T-cell (primary cell): ENCODE measurements at regions of chr9 and their contacts with region 1.

Region 1: DNA sequence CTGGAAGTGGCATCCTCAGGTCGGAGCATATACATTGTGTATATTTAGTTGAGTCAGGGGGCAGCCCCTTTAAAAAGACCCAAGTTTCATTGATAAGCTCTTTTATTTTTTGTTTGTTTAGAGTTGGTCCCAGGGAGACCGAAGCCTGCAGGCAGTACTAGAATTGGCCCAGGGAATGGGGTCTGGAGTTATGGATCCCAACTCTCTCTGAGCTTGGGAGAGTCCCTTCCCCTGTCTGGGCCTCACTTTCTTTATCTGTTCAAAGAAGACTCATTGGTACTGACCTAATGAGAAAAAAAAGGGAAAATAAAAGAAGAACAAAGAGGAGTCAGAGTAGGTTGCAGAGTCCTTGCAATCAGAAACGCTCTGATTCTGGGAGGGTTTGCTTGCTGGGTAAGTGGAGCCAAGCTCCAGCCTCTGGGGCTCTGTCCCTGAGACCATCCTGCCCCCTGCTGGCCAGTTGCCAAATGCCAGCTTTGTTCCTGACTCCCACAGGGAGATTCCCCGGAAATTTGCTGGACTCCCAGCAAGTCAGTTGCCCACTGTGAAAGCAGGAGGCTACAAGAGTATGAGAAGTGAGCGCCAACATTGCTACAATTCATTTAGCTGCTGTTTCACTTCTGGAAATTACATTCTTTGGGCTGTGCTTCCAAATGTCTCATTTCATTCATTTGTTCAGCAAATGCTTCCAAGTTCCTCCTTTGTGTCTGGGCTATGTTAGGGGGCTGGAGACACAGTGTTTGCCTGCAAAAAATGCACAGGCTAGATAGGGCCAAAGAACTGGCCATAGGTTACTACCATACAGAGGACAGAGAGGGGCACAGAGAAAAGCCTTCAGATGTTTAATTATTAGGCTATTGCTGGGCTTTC is 156.2 kb downstream of the MELK start:
- DNase-seq: peak in 30 of 35 experiments; percentile 6 to 70 (median 44)
- ATAC-seq: peak in 3 of 4 experiments; percentile 41 to 67 (median 56)
- H3K4me3 ChIP-seq: no peak overlapping the region
- H3K4me3 Mint-ChIP-seq: no peak overlapping the region
- H3K27ac ChIP-seq: no peak overlapping the region
- H3K27ac Mint-ChIP-seq: no peak overlapping the region
- H3K4me1 ChIP-seq: no peaks in the 10 kb centered on the region
- H3K4me1 Mint-ChIP-seq: peaks cover 0 to 4% (median 0%) of the 10 kb centered on the region in 3 donors
- H3K27me3 ChIP-seq: peaks cover 0 to 7% of the 10 kb centered on the region in 2 experiments
- H3K27me3 Mint-ChIP-seq: no peaks in the 10 kb centered on the region

Region 2: DNA sequence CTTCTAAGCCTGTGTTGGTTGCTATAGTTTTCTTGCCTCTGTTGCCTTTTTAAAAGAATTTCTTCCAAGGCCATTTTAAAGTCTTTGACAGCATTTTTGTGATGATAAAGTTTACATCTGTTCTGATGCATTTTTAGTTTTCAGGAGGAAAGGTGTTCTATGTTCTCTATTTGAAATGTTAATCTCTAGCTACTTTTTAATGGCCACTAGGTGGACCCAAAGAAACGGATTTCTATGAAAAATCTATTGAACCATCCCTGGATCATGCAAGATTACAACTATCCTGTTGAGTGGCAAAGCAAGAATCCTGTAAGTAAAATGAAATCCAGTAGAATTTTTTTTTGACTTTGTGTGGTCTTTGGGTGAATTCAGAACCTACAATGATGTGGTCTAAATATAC is 96.0 kb before region 1 on chr9:
- CTCF ChIA-PET with region 1: interaction called in 1 of 2 experiments, 18 read pairs
- POLR2A ChIA-PET with region 1: no interaction called
- DNase-seq: peak in 1 of 35 experiments; percentile 37
- ATAC-seq: no peak
- H3K4me3 ChIP-seq: no peak overlapping the region
- H3K4me3 Mint-ChIP-seq: no peak overlapping the region
- H3K27ac ChIP-seq: no peak overlapping the region
- H3K27ac Mint-ChIP-seq: no peak overlapping the region
- H3K4me1 ChIP-seq: no peaks in the 10 kb centered on the region
- H3K4me1 Mint-ChIP-seq: no peaks in the 10 kb centered on the region
- H3K27me3 ChIP-seq: no peaks in the 10 kb centered on the region
- H3K27me3 Mint-ChIP-seq: no peaks in the 10 kb centered on the region

Region 3: GRCh38 chr9:36690412-36691168 is 38.3 kb before region 1 on chr9:
- CTCF ChIA-PET with region 1: no interaction called
- POLR2A ChIA-PET with region 1: no interaction called
- DNase-seq: no peak
- ATAC-seq: no peak
- H3K4me3 ChIP-seq: no peak overlapping the region
- H3K4me3 Mint-ChIP-seq: no peak overlapping the region
- H3K27ac ChIP-seq: no peak overlapping the region
- H3K27ac Mint-ChIP-seq: no peak overlapping the region
- H3K4me1 ChIP-seq: no peaks in the 10 kb centered on the region
- H3K4me1 Mint-ChIP-seq: no peaks in the 10 kb centered on the region
- H3K27me3 ChIP-seq: peaks cover 0 to 6% of the 10 kb centered on the region in 2 experiments
- H3K27me3 Mint-ChIP-seq: peaks cover 9 to 10% of the 10 kb centered on the region in 2 donors

Region 4: GRCh38 chr9:36924071-36924470 is 195.2 kb after region 1 on chr9:
- CTCF ChIA-PET with region 1: no interaction called
- POLR2A ChIA-PET with region 1: no interaction called
- DNase-seq: no peak
- ATAC-seq: no peak
- H3K4me3 ChIP-seq: no peak overlapping the region
- H3K4me3 Mint-ChIP-seq: no peak overlapping the region
- H3K27ac ChIP-seq: no peak overlapping the region
- H3K27ac Mint-ChIP-seq: no peak overlapping the region
- H3K4me1 ChIP-seq: no peaks in the 10 kb centered on the region
- H3K4me1 Mint-ChIP-seq: peaks cover 0 to 3% (median 0%) of the 10 kb centered on the region in 3 donors
- H3K27me3 ChIP-seq: peaks cover 0 to 14% of the 10 kb centered on the region in 2 experiments
- H3K27me3 Mint-ChIP-seq: peaks cover 12 to 16% of the 10 kb centered on the region in 2 donors